ENCODE measurements at regions of chr9 and their contacts with region 1.

Region 1: GRCh38 chr9:127734747-127735529 is at the start of gene TOR2A:
- DNase-seq: peak; percentile 81
- ATAC-seq: peak; percentile 98
- H3K4me3 ChIP-seq: peak within 1 kb of the TSS; percentile 76
- H3K27ac ChIP-seq: peak within 1 kb of the TSS; percentile 71
- H3K4me1 ChIP-seq: peaks cover 6% of the 10 kb centered on the region
- H3K27me3 ChIP-seq: no peaks in the 10 kb centered on the region
- CTCF ChIP-seq: peak; percentile 96 to 99 (median 96)
- EP300 ChIP-seq: peak in 1 of 2 experiments; percentile 62; a peak in 1 of 4 replicates
- POLR2A ChIP-seq: peak; percentile 93
- RAD21 ChIP-seq: peak; percentile 96
- polyA plus RNA-seq, gene TOR2A: 0.52 to 1.6 TPM

Region 2: DNA sequence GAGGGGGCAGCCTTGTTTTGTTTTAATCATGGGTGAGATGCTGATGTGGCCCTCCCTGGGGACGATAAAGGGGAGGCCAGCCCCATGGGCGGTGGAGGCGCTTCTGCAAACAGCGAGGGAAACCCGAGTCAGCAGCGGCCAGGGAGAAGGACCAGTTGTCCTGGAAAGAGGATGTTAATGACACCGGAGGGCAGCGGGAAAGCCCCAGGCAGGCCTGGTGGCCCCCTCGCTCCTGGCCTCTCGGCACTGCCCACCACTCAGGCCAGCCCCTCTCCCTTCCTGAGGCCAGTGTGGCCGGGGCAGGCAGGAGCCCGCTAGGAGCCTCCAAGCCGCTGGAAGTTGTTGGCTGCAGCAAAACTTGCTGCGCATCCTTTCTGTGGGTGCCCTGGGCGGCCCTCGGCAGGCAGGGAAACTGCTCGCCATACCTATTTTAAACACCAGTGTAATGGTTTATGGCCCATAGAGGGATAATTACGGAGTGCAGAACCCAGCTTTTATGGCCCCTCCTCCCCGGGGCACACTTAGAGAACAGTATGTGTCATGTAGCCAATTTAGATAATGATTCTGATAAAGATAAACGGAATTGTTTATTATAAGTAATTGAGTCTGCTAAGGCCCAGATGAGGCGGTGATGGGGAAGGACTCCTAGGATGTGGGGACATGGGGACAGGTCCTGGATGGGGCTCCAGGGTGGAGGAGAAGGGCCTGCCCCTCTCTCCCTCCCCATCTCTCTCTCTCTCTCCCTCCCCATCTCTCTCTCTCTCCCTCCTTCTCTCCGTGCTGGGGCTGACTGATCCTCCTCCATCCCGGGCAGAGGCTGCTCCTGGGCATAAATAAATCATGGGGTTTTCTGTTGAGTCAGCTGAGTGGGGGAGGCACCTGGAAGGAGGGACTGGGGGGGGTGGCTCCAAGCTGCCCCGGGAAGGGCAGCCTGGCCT is 1084.3 kb before region 1 on chr9:
- CTCF ChIA-PET with region 1: no interaction called
- POLR2A ChIA-PET with region 1: no interaction called
- RAD21 ChIA-PET with region 1: no interaction called
- SMC1A ChIA-PET with region 1: no interaction called
- in situ Hi-C with region 1: no loop called
- intact Hi-C with region 1: no loop called
- DNase-seq: no peak
- ATAC-seq: no peak
- H3K4me3 ChIP-seq: no peak overlapping the region
- H3K27ac ChIP-seq: no peak overlapping the region
- H3K4me1 ChIP-seq: no peaks in the 10 kb centered on the region
- H3K27me3 ChIP-seq: peaks cover 12 to 13% of the 10 kb centered on the region in 2 experiments
- CTCF ChIP-seq: no peak
- EP300 ChIP-seq: no peak
- POLR2A ChIP-seq: no peak
- RAD21 ChIP-seq: no peak

Region 3: DNA sequence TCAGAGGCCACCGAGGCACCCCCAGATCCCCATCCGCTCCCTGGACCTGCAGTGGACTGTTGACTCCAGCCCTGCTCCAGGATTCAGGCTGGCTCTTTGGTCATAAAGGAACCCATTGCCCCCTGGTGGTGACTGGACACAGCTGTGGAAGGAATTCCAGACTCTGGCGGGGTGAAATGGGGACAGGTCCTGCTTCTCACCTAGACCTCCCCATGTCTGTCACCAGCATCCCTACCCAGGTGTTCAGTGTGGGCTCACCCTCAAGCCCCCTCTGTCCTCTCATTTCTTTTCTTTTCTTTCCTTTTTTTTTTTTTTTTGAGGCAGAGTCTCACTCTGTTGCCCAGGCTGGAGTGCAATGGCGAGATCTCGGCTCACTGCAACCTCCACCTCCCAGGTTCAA is 148.4 kb before region 1 on chr9:
- CTCF ChIA-PET with region 1: interaction called, 49 read pairs
- POLR2A ChIA-PET with region 1: interaction called, 7 read pairs
- RAD21 ChIA-PET with region 1: interaction called, 24 read pairs
- SMC1A ChIA-PET with region 1: interaction called, 25 read pairs
- in situ Hi-C with region 1: loop called (anchors 5 kb)
- intact Hi-C with region 1: loop called (anchors 1 kb)
- DNase-seq: no peak
- ATAC-seq: peak; percentile 91
- H3K4me3 ChIP-seq: no peak overlapping the region
- H3K27ac ChIP-seq: no peak overlapping the region
- H3K4me1 ChIP-seq: no peaks in the 10 kb centered on the region; the same call in 1 of the 2 replicates
- H3K27me3 ChIP-seq: no peaks in the 10 kb centered on the region
- CTCF ChIP-seq: peak; percentile 77 to 91 (median 85)
- EP300 ChIP-seq: no peak
- POLR2A ChIP-seq: no peak
- RAD21 ChIP-seq: peak; percentile 86

Region 4: DNA sequence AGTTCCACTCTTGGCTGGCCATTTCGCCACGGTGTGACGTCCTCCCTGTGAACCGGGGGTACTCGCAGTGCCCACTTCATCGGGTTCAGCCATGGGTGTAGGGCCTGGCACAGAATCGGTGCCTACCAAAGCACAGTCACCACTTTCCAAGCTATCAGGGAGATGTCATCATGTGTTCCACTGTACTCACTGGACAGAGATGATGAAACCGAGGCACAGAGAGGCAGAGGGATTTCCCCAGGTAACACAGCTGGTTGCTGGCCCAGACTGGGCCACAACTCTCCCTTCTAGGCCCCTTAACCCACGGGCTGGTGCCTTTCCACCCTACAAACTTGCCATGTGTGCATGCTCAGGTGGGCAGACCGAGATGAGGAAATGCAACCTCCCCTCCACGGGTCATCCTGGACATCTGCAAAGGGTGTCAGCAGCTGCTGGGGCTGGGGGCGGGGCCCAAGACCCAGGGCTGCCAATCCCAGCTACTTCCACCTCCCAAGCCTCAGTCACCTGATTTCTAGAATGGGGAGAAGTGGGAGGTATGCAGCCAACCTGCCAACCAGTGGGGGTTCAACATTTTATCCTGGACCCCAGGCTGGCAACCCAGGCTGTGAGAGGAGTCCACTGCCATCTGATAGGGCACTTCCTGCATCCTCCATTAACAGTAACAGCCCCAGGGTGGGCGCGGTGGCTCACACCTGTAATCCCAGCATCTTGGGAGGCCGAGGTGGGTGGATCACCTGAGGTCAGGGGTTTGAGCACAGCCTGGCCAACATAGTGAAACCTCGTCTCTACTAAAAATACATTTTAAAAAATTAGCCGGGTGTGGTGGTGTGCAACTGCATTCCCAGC is 44.4 kb after region 1 on chr9:
- CTCF ChIA-PET with region 1: interaction called, 63 read pairs
- POLR2A ChIA-PET with region 1: interaction called, 13 read pairs
- RAD21 ChIA-PET with region 1: interaction called, 37 read pairs
- SMC1A ChIA-PET with region 1: interaction called, 16 read pairs
- in situ Hi-C with region 1: no loop called
- intact Hi-C with region 1: loop called (anchors 2 kb)
- DNase-seq: peak; percentile 79
- ATAC-seq: peak; percentile 62
- H3K4me3 ChIP-seq: peak overlapping the region; percentile 100
- H3K27ac ChIP-seq: peak overlapping the region; percentile 93
- H3K4me1 ChIP-seq: peaks cover 44% of the 10 kb centered on the region
- H3K27me3 ChIP-seq: no peaks in the 10 kb centered on the region
- CTCF ChIP-seq: no peak
- EP300 ChIP-seq: peak in 1 of 2 experiments; percentile 23; a peak in 1 of 4 replicates
- POLR2A ChIP-seq: peak; percentile 50; the same call in 1 of the 2 replicates
- RAD21 ChIP-seq: no peak

Region 5: DNA sequence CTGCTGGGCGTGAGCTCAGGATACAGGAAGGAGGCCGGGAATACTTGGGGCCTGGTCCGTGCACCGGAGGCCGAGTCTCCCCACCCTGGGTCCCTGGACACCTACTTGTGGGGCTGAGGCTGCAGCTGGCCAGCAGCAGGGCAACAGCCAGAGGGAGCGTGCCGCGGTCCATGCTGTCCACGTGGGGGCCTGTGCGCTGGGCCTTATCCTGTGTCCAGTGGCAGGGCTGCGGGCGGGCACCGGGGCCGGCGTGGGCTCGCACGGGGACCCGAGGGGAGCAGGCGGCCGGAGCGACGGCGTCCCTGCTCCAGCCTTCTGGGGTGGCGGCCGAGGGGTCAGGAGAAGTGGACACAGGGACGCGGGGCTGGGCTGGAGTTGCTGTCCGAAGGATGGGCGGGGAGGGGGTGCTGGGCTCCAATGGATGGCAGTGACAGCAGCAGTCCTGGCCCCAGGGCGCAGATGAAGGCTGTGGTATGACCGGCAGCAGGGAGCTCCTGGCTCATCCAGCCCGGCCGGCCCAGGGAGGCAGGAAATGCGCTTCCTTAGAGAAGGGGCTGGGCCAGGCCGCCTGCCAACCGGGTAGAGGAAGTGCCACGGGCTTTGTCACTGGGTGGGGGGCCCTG is 119.4 kb after region 1 on chr9 and contains the start of gene ENG:
- CTCF ChIA-PET with region 1: interaction called, 16 read pairs
- POLR2A ChIA-PET with region 1: no interaction called
- RAD21 ChIA-PET with region 1: interaction called, 9 read pairs
- SMC1A ChIA-PET with region 1: interaction called, 5 read pairs
- in situ Hi-C with region 1: no loop called
- intact Hi-C with region 1: no loop called
- DNase-seq: no peak
- ATAC-seq: peak; percentile 69
- H3K4me3 ChIP-seq: peak within 1 kb of the TSS; percentile 78
- H3K27ac ChIP-seq: peak within 1 kb of the TSS; percentile 45
- H3K4me1 ChIP-seq: peaks cover 6% of the 10 kb centered on the region
- H3K27me3 ChIP-seq: no peaks in the 10 kb centered on the region
- CTCF ChIP-seq: no peak
- EP300 ChIP-seq: no peak
- POLR2A ChIP-seq: no peak
- RAD21 ChIP-seq: no peak
- polyA plus RNA-seq, gene ENG: 0.14 to 0.24 TPM

Region 6: GRCh38 chr9:127905004-127905728 is 170.2 kb after region 1 on chr9:
- CTCF ChIA-PET with region 1: interaction called, 5 read pairs
- POLR2A ChIA-PET with region 1: no interaction called
- RAD21 ChIA-PET with region 1: interaction called, 11 read pairs
- SMC1A ChIA-PET with region 1: interaction called, 6 read pairs
- in situ Hi-C with region 1: loop called (anchors 5 kb)
- intact Hi-C with region 1: no loop called
- DNase-seq: no peak
- ATAC-seq: peak; percentile 31
- H3K4me3 ChIP-seq: peak overlapping the region; percentile 17; the same call in 1 of the 2 replicates
- H3K27ac ChIP-seq: peak overlapping the region; percentile 90
- H3K4me1 ChIP-seq: peaks cover 60% of the 10 kb centered on the region
- H3K27me3 ChIP-seq: no peaks in the 10 kb centered on the region
- CTCF ChIP-seq: no peak
- EP300 ChIP-seq: no peak
- POLR2A ChIP-seq: peak; percentile 63
- RAD21 ChIP-seq: no peak

Measured in GM12878 (cell line).